ENCODE measurements at regions of chr17 and their contacts with region 1.

Region 1: GRCh38 chr17:76278952-76279741 is 14.0 kb downstream of the UBALD2 start:
- DNase-seq: peak; percentile 94
- ATAC-seq: peak; percentile 93
- H3K4me3 Mint-ChIP-seq: no peak overlapping the region
- H3K27ac Mint-ChIP-seq: no peak overlapping the region
- H3K4me1 Mint-ChIP-seq: no peaks in the 10 kb centered on the region
- H3K27me3 Mint-ChIP-seq: no peaks in the 10 kb centered on the region
- CTCF ChIP-seq: peak; percentile 96

Region 2: GRCh38 chr17:76005263-76006149 is 273.6 kb before region 1 on chr17:
- CTCF ChIA-PET with region 1: interaction called, 20 read pairs
- POLR2A ChIA-PET with region 1: no interaction called
- DNase-seq: peak; percentile 93
- ATAC-seq: peak; percentile 82
- H3K4me3 Mint-ChIP-seq: no peak overlapping the region
- H3K27ac Mint-ChIP-seq: peak overlapping the region; percentile 92
- H3K4me1 Mint-ChIP-seq: no peaks in the 10 kb centered on the region
- H3K27me3 Mint-ChIP-seq: no peaks in the 10 kb centered on the region
- CTCF ChIP-seq: peak; percentile 91

Region 3: DNA sequence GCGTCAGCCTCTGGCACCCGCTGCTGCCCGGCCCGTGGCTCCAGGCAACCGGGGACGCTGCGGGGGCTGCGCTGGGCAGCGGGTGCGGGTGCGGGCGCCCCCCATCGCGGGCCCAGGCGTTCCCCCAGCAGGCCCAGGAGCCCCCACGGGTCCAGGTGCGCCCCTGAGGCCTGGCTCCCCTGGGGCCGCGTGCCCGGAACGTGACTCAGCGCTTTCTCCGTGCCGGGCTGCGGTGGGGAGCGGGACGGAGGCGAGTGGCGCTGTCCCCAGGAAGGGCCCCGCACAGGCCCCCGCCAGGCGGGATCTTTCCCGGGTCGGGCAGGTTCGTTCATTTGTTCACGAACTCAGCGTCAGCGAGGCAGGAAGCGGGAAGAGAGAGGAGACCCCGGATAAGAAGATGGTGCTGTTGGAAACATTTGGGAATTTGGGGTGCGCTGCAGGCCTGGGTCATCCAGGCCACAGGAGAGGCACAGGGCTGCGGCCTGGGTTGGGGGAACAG is 157.2 kb before region 1 on chr17:
- CTCF ChIA-PET with region 1: interaction called, 120 read pairs
- POLR2A ChIA-PET with region 1: interaction called, 3 read pairs
- DNase-seq: peak; percentile 54
- ATAC-seq: peak; percentile 5; the same call in 1 of the 2 replicates
- H3K4me3 Mint-ChIP-seq: no peak overlapping the region; the same call in 1 of the 2 replicates
- H3K27ac Mint-ChIP-seq: peak overlapping the region; percentile 19; the same call in 1 of the 2 replicates
- H3K4me1 Mint-ChIP-seq: peaks cover 39% of the 10 kb centered on the region
- H3K27me3 Mint-ChIP-seq: no peaks in the 10 kb centered on the region; the same call in none of the 2 replicates
- CTCF ChIP-seq: no peak

Region 4: GRCh38 chr17:76153640-76154039 is 125.5 kb before region 1 on chr17:
- CTCF ChIA-PET with region 1: interaction called, 18 read pairs
- POLR2A ChIA-PET with region 1: no interaction called
- DNase-seq: no peak
- ATAC-seq: peak; percentile 28; the same call in 1 of the 2 replicates
- H3K4me3 Mint-ChIP-seq: no peak overlapping the region
- H3K27ac Mint-ChIP-seq: no peak overlapping the region
- H3K4me1 Mint-ChIP-seq: peaks cover 32% of the 10 kb centered on the region
- H3K27me3 Mint-ChIP-seq: no peaks in the 10 kb centered on the region
- CTCF ChIP-seq: no peak

Region 5: DNA sequence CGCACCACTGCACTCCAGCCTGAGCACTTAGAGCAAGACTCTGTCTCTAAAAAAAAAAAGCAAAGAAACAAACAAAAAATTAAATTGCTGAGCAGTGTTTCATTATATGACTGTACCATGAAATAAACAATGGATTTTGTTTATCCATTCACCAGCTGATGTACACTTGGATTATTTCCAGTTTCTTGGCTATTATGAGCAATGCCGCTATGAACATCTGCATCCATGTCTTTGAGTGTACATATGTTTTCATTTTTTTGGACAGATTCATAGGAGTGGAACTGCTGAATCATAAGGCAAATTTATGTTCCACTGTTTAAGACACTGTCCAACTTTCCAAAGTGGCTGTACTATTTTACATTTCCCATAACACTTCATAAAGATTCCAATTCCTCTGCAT is 46.8 kb before region 1 on chr17:
- CTCF ChIA-PET with region 1: interaction called, 11 read pairs
- POLR2A ChIA-PET with region 1: no interaction called
- DNase-seq: no peak
- ATAC-seq: no peak
- H3K4me3 Mint-ChIP-seq: no peak overlapping the region
- H3K27ac Mint-ChIP-seq: no peak overlapping the region
- H3K4me1 Mint-ChIP-seq: peaks cover 5% of the 10 kb centered on the region
- H3K27me3 Mint-ChIP-seq: peaks cover 3% of the 10 kb centered on the region
- CTCF ChIP-seq: no peak

Region 6: DNA sequence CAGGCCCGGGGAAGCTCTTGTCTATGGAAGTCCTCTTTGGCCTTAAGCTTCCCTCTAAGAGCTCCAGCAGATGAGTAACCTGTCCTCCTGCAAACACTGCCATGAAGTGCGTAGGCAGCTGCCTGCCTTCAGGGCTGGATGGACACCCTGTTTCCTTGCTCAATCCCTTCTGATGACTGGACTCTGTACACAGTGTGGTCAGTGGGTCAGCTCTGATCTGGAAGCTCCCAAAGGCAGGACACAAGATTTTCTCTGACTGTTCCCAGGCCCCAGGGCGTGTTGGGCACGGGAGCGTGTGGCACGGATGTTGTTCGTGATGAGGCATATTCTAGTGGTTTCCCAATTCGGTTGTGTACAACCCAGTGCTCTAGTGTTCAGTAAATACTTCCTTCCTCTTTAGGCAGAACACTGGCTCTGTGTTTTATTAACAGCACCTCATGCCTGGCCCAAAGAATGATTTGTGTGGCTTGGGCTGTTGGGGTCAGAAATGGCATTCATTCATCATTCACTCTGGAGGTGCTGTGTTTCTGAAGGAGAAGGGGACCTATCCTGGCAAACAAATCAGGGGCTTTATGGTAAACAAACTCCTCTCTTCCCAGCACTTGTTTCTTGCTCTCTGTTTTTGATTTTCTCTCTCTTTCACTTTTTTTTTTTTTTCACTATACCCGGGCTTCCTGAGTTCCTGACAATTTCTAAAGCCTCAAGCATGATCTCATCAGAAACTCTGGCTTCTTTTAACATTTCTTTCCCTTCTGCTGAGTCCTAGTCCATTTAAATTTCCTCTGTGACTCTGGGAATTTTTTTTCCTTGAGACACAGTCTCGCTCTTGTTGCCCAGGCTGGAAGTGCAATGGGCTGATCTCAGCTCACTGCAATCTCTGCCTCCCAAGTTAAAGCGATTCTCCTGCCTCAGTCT is 26.9 kb before region 1 on chr17:
- CTCF ChIA-PET with region 1: interaction called, 19 read pairs
- POLR2A ChIA-PET with region 1: no interaction called
- DNase-seq: no peak
- ATAC-seq: no peak
- H3K4me3 Mint-ChIP-seq: no peak overlapping the region
- H3K27ac Mint-ChIP-seq: no peak overlapping the region
- H3K4me1 Mint-ChIP-seq: peaks cover 4% of the 10 kb centered on the region; the same call in 1 of the 2 replicates
- H3K27me3 Mint-ChIP-seq: no peaks in the 10 kb centered on the region
- CTCF ChIP-seq: no peak